ENCODE measurements at regions of chr9 and their contacts with region 1.

Region 1: GRCh38 chr9:111959468-111960359 is 63.1 kb downstream of the UGCG start:
- DNase-seq: no peak

Region 2: DNA sequence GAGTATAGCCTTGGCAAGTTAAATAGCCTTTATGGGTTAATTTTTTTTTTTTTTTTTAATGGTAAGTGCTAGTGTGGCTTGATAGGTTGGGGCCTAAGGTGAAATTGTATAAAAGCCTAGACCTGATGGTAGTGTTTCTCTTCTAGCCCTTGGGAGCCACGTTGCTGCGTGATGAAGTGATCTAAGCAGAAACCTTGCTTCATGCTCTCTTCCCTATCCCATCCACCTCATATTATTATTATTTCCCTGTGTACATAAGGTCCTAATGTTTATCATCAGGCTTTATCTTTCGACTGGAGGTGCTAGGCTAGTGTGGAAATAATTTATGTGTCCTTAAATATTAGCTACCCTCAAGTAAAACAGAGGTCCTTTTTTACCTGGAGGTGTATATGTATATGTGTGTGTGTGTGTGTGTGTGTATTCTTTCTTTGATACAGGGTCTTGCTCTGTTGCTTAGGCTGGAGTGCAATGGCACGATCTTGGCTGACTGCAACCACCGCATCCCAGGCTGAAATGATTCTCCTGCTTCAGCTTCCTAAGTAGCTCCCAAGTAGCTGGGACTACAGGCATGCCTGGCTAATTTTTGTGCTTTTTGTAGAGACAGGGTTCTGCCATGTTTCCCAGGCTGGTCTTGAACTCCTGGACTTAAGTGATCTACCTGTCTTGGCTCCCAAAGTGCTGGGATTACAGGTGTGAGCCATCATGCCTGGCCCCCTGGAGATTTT is 59.5 kb before region 1 on chr9:
- CTCF ChIA-PET with region 1: interaction called, 10 read pairs
- POLR2A ChIA-PET with region 1: interaction called, 8 read pairs
- DNase-seq: no peak

Region 3: GRCh38 chr9:111945216-111945615 is 14.5 kb before region 1 on chr9:
- CTCF ChIA-PET with region 1: no interaction called
- POLR2A ChIA-PET with region 1: no interaction called
- DNase-seq: no peak